CD4-positive, alpha-beta T cell (primary cell): ENCODE measurements at regions of chr20 and their contacts with region 1.

Region 1: GRCh38 chr20:33915726-33916331 is 77.9 kb upstream of the RALY start:
- DNase-seq: peak; percentile 30 to 73 (median 42)
- ATAC-seq: peak; percentile 39
- H3K4me3 ChIP-seq: no peak overlapping the region
- H3K4me3 Mint-ChIP-seq: no peak overlapping the region
- H3K27ac ChIP-seq: no peak overlapping the region
- H3K27ac Mint-ChIP-seq: no peak overlapping the region
- H3K4me1 ChIP-seq: peaks cover 5% of the 10 kb centered on the region
- H3K4me1 Mint-ChIP-seq: peaks cover 15% of the 10 kb centered on the region
- H3K27me3 ChIP-seq: no peaks in the 10 kb centered on the region
- H3K27me3 Mint-ChIP-seq: no peaks in the 10 kb centered on the region
- CTCF ChIP-seq: peak; percentile 67

Region 2: GRCh38 chr20:33791959-33792597 is 123.8 kb before region 1 on chr20:
- CTCF ChIA-PET with region 1: no interaction called
- POLR2A ChIA-PET with region 1: no interaction called
- intact Hi-C with region 1: loop called (anchors 1 kb)
- DNase-seq: peak; percentile 27 to 68 (median 40)
- ATAC-seq: peak; percentile 65
- H3K4me3 ChIP-seq: no peak overlapping the region
- H3K4me3 Mint-ChIP-seq: no peak overlapping the region
- H3K27ac ChIP-seq: no peak overlapping the region
- H3K27ac Mint-ChIP-seq: no peak overlapping the region
- H3K4me1 ChIP-seq: peaks cover 8% of the 10 kb centered on the region
- H3K4me1 Mint-ChIP-seq: peaks cover 9% of the 10 kb centered on the region
- H3K27me3 ChIP-seq: no peaks in the 10 kb centered on the region
- H3K27me3 Mint-ChIP-seq: no peaks in the 10 kb centered on the region
- CTCF ChIP-seq: peak; percentile 83

Region 3: DNA sequence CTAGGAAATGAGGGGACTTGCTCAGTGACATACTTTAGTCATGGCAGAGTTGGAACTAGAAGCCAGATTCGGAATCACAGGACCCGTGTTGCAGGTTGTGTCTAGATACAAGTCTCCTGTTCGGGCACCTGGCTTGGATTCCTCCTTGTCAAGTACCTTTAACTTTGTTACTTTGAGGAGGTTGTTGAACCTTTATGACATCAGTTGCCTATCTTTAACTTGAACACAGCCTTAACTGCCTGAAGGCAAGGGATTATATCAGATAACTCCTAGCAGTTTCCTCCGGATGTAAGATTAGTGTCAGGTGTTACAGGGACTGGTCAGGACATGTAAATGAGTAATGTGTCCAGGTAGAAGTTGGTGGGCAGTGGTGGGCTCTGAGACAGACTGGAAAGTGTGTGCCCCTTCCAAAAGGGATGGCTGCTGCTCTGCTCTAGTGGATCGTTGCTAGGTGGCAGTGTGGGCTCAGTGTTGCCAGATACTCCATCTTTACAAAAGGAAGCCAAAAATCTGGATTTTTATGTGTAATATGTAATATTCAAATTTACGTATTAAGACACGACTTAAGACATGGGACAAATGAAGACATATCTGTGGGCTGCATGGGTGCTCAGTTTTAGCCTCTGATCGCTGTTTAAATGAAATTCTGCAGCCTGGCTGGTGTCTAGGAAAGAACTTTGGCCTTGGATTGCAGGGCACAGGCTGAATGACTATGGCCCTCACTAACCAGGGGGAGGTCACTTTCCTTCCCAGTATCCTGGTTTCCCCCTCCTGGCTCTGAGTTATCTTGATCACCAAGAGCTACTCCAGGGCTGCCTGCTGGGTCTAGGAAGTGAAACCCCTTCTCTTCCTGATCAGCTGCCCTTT is 77.6 kb before region 1 on chr20:
- CTCF ChIA-PET with region 1: no interaction called
- POLR2A ChIA-PET with region 1: no interaction called
- intact Hi-C with region 1: loop called in 1 of 2 experiments (anchors 5 kb)
- DNase-seq: no peak
- ATAC-seq: no peak
- H3K4me3 ChIP-seq: no peak overlapping the region
- H3K4me3 Mint-ChIP-seq: peak overlapping the region; percentile 17
- H3K27ac ChIP-seq: no peak overlapping the region
- H3K27ac Mint-ChIP-seq: peak overlapping the region; percentile 60
- H3K4me1 ChIP-seq: peaks cover 61% of the 10 kb centered on the region
- H3K4me1 Mint-ChIP-seq: peaks cover 92% of the 10 kb centered on the region
- H3K27me3 ChIP-seq: no peaks in the 10 kb centered on the region
- H3K27me3 Mint-ChIP-seq: no peaks in the 10 kb centered on the region
- CTCF ChIP-seq: no peak

Region 4: DNA sequence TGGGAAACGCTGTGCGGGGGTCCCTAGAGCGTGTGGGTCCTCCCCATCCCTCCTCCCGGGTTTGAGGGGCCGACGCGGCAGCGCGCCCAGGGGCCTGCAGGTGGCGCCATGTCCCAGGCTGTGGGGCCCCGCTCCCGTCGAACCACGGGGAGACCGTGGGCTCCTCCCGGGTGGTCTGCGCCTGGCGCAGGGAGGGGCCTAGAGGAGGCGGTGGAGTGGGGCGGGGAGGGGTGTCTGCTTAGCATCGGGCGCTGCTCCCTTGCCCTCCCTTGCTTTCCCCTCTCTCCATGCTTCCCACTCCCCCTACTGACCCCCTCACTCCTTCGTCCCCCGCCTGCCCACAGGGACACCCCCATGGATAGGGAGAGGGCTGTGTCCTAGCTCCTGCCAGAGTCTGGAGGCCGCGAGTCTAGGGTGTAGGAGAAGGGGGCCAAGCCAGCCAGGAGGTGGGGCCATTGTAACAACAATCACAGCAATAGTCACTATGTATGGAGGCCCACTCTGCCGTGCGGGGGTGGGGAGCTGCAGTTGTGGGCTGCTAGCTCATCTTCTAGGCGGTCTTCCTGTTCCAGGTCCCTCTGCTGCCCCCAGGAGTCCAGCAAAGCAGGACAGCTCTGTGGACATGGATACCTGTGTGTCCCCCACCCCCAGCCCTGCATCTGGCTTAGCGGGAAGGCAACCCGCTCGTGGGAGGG is 53.0 kb before region 1 on chr20:
- CTCF ChIA-PET with region 1: no interaction called
- POLR2A ChIA-PET with region 1: no interaction called
- intact Hi-C with region 1: loop called in 1 of 2 experiments (anchors 5 kb)
- DNase-seq: peak in 13 of 14 experiments; percentile 18 to 65 (median 37)
- ATAC-seq: peak; percentile 37
- H3K4me3 ChIP-seq: no peak overlapping the region
- H3K4me3 Mint-ChIP-seq: no peak overlapping the region
- H3K27ac ChIP-seq: no peak overlapping the region
- H3K27ac Mint-ChIP-seq: no peak overlapping the region
- H3K4me1 ChIP-seq: peaks cover 32% of the 10 kb centered on the region
- H3K4me1 Mint-ChIP-seq: peaks cover 31% of the 10 kb centered on the region
- H3K27me3 ChIP-seq: no peaks in the 10 kb centered on the region
- H3K27me3 Mint-ChIP-seq: no peaks in the 10 kb centered on the region
- CTCF ChIP-seq: peak; percentile 62

Region 5: GRCh38 chr20:34069341-34070078 is 153.7 kb after region 1 on chr20:
- CTCF ChIA-PET with region 1: interaction called, 14 read pairs
- POLR2A ChIA-PET with region 1: no interaction called
- intact Hi-C with region 1: loop called (anchors 1 to 2 kb)
- DNase-seq: peak; percentile 33 to 79 (median 46)
- ATAC-seq: peak; percentile 90
- H3K4me3 ChIP-seq: no peak overlapping the region
- H3K4me3 Mint-ChIP-seq: no peak overlapping the region
- H3K27ac ChIP-seq: no peak overlapping the region
- H3K27ac Mint-ChIP-seq: peak overlapping the region; percentile 39
- H3K4me1 ChIP-seq: peaks cover 12% of the 10 kb centered on the region
- H3K4me1 Mint-ChIP-seq: peaks cover 52% of the 10 kb centered on the region
- H3K27me3 ChIP-seq: no peaks in the 10 kb centered on the region
- H3K27me3 Mint-ChIP-seq: no peaks in the 10 kb centered on the region
- CTCF ChIP-seq: peak; percentile 78

Region 6: GRCh38 chr20:34143951-34144350 is 228.1 kb after region 1 on chr20:
- CTCF ChIA-PET with region 1: no interaction called
- POLR2A ChIA-PET with region 1: no interaction called
- intact Hi-C with region 1: no loop called
- DNase-seq: no peak
- ATAC-seq: no peak
- H3K4me3 ChIP-seq: no peak overlapping the region
- H3K4me3 Mint-ChIP-seq: no peak overlapping the region
- H3K27ac ChIP-seq: no peak overlapping the region
- H3K27ac Mint-ChIP-seq: no peak overlapping the region
- H3K4me1 ChIP-seq: no peaks in the 10 kb centered on the region
- H3K4me1 Mint-ChIP-seq: no peaks in the 10 kb centered on the region
- H3K27me3 ChIP-seq: peaks cover 0 to 3% of the 10 kb centered on the region in 2 experiments
- H3K27me3 Mint-ChIP-seq: peaks cover 4% of the 10 kb centered on the region
- CTCF ChIP-seq: no peak

Region 7: DNA sequence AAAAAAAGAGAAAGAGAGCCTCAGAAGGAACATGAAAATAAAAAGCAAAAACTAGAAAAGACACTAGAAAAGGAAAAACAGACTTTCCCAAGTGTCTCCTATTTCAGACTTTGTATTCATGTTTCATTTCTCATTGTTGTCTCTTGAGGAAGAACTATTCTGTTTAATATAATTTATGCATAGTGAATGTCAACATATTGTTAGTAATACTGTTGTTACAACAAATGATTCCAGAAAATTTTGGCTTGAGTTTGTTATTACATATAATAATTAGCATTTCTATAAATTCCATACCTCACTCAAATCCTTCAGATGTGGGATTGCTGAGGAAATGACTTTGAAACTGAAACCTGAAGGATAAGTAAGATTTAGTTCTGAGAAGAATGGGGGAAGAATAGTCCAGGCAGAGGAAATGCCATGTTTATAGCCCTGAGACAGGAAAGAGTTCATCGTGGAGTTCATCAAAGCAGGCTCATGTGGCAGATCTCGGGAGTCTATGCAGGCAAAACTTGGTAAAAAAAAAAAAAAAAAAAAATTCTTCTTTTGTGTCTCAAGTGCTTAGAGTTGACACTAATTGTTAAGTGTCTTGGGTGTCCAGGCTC is 249.3 kb after region 1 on chr20:
- CTCF ChIA-PET with region 1: no interaction called
- POLR2A ChIA-PET with region 1: no interaction called
- intact Hi-C with region 1: no loop called
- DNase-seq: no peak
- ATAC-seq: no peak
- H3K4me3 ChIP-seq: no peak overlapping the region
- H3K4me3 Mint-ChIP-seq: no peak overlapping the region
- H3K27ac ChIP-seq: no peak overlapping the region
- H3K27ac Mint-ChIP-seq: no peak overlapping the region
- H3K4me1 ChIP-seq: no peaks in the 10 kb centered on the region
- H3K4me1 Mint-ChIP-seq: no peaks in the 10 kb centered on the region
- H3K27me3 ChIP-seq: no peaks in the 10 kb centered on the region
- H3K27me3 Mint-ChIP-seq: peaks cover under 1% of the 10 kb centered on the region
- CTCF ChIP-seq: no peak